HepG2 (cell line): ENCODE measurements at regions of chr12 and their contacts with region 1.

Region 1: GRCh38 chr12:28489246-28489645 is 299.0 kb downstream of the CCDC91 start:
- DNase-seq: no peak
- ATAC-seq: no peak
- H3K4me3 ChIP-seq: no peak overlapping the region
- H3K27ac ChIP-seq: no peak overlapping the region
- H3K4me1 ChIP-seq: no peaks in the 10 kb centered on the region
- H3K27me3 ChIP-seq: no peaks in the 10 kb centered on the region
- CTCF ChIP-seq: no peak
- EP300 ChIP-seq: no peak
- POLR2A ChIP-seq: no peak
- RAD21 ChIP-seq: no peak

Region 2: GRCh38 chr12:28202374-28203130 is 286.7 kb before region 1 on chr12:
- CTCF ChIA-PET with region 1: no interaction called
- POLR2A ChIA-PET with region 1: no interaction called
- in situ Hi-C with region 1: no loop called
- intact Hi-C with region 1: no loop called
- DNase-seq: peak; percentile 39
- ATAC-seq: peak; percentile 90
- H3K4me3 ChIP-seq: no peak overlapping the region
- H3K27ac ChIP-seq: no peak overlapping the region
- H3K4me1 ChIP-seq: peaks cover 14% of the 10 kb centered on the region
- H3K27me3 ChIP-seq: no peaks in the 10 kb centered on the region
- CTCF ChIP-seq: peak; percentile 8; the same call in 1 of the 2 replicates
- EP300 ChIP-seq: 0 out of 4 replicates have a peak, but pooled peaks of 1 of the 2 experiments have one; percentile 49
- POLR2A ChIP-seq: no peak
- RAD21 ChIP-seq: no peak

Region 3: GRCh38 chr12:28424965-28425364 is 64.3 kb before region 1 on chr12:
- CTCF ChIA-PET with region 1: no interaction called
- POLR2A ChIA-PET with region 1: no interaction called
- in situ Hi-C with region 1: no loop called
- intact Hi-C with region 1: loop called (anchors 10 kb)
- DNase-seq: peak; percentile 22
- ATAC-seq: peak; percentile 41; the same call in 1 of the 3 replicates
- H3K4me3 ChIP-seq: no peak overlapping the region
- H3K27ac ChIP-seq: no peak overlapping the region
- H3K4me1 ChIP-seq: peaks cover 8% of the 10 kb centered on the region; the same call in 1 of the 2 replicates
- H3K27me3 ChIP-seq: no peaks in the 10 kb centered on the region
- CTCF ChIP-seq: no peak
- EP300 ChIP-seq: no peak
- POLR2A ChIP-seq: no peak
- RAD21 ChIP-seq: no peak

Region 4: DNA sequence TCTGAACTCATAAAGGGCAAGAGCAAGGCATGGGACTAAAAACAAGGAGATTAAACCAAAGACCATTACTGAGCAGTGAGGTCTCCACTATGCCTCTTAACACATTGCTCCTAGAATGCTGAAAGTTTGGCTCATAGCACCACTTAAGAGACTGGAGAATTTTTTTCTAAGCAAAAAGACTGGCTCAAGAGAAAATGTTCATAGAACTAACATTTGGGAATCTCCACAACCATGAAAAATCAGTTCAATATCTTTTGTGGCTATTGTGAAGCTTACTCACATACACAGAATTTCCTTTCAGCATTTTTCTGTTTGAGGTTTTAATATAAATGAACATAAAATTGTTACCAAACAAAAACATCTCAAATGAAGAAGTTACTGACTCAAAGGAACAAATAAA is 43.2 kb before region 1 on chr12:
- CTCF ChIA-PET with region 1: no interaction called
- POLR2A ChIA-PET with region 1: no interaction called
- in situ Hi-C with region 1: no loop called
- intact Hi-C with region 1: no loop called
- DNase-seq: no peak
- ATAC-seq: no peak
- H3K4me3 ChIP-seq: no peak overlapping the region
- H3K27ac ChIP-seq: no peak overlapping the region
- H3K4me1 ChIP-seq: no peaks in the 10 kb centered on the region
- H3K27me3 ChIP-seq: no peaks in the 10 kb centered on the region
- CTCF ChIP-seq: no peak
- EP300 ChIP-seq: no peak
- POLR2A ChIP-seq: no peak
- RAD21 ChIP-seq: no peak